ENCODE measurements at regions of chr10 and their contacts with region 1.

Region 1: GRCh38 chr10:112140110-112140970 is 43.2 kb downstream of the GPAM start:
- DNase-seq: peak; percentile 88
- H3K4me3 Mint-ChIP-seq: no peak overlapping the region
- H3K27ac Mint-ChIP-seq: no peak overlapping the region
- H3K4me1 Mint-ChIP-seq: no peaks in the 10 kb centered on the region
- H3K27me3 Mint-ChIP-seq: no peaks in the 10 kb centered on the region
- CTCF ChIP-seq: peak; percentile 92

Region 2: DNA sequence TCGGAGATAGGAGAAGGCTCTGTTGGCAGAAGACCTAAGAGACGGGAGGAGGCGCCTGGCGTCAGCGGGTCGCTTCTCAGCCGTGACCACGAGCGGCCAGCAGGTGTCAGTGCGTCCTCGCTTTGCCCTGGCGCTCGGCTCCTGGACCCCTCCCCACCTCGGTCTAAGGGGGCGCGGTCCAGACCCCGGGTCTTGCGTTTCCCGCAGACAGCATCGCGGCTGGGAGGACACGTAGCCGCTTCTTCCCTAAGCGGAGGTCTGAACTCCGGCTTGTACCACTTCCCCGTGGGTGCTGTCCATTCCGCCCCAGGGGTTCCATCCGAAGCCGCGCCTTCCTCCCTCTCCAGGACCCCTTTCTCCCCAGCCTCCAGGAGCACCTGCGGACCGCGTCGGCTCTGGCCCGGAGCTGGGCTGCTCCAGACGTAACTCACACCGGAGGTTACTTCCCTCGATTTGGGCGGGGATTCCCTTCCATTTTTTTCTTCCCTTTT is 1064.1 kb before region 1 on chr10:
- CTCF ChIA-PET with region 1: interaction called, 99 read pairs
- POLR2A ChIA-PET with region 1: interaction called, 3 read pairs
- intact Hi-C with region 1: loop called (anchors 5 kb)
- DNase-seq: peak; percentile 42
- H3K4me3 Mint-ChIP-seq: peak overlapping the region; percentile 69
- H3K27ac Mint-ChIP-seq: no peak overlapping the region
- H3K4me1 Mint-ChIP-seq: no peaks in the 10 kb centered on the region
- H3K27me3 Mint-ChIP-seq: peaks cover 46% of the 10 kb centered on the region
- CTCF ChIP-seq: peak; percentile 88

Region 3: GRCh38 chr10:111579473-111579872 is 560.9 kb before region 1 on chr10:
- CTCF ChIA-PET with region 1: no interaction called
- POLR2A ChIA-PET with region 1: no interaction called
- intact Hi-C with region 1: no loop called
- DNase-seq: no peak
- H3K4me3 Mint-ChIP-seq: no peak overlapping the region
- H3K27ac Mint-ChIP-seq: no peak overlapping the region
- H3K4me1 Mint-ChIP-seq: no peaks in the 10 kb centered on the region
- H3K27me3 Mint-ChIP-seq: no peaks in the 10 kb centered on the region
- CTCF ChIP-seq: no peak

Region 4: GRCh38 chr10:111598436-111599059 is 541.8 kb before region 1 on chr10:
- CTCF ChIA-PET with region 1: interaction called, 10 read pairs
- POLR2A ChIA-PET with region 1: no interaction called
- intact Hi-C with region 1: no loop called
- DNase-seq: peak; percentile 67
- H3K4me3 Mint-ChIP-seq: no peak overlapping the region
- H3K27ac Mint-ChIP-seq: no peak overlapping the region
- H3K4me1 Mint-ChIP-seq: no peaks in the 10 kb centered on the region
- H3K27me3 Mint-ChIP-seq: no peaks in the 10 kb centered on the region
- CTCF ChIP-seq: peak; percentile 80

Region 5: DNA sequence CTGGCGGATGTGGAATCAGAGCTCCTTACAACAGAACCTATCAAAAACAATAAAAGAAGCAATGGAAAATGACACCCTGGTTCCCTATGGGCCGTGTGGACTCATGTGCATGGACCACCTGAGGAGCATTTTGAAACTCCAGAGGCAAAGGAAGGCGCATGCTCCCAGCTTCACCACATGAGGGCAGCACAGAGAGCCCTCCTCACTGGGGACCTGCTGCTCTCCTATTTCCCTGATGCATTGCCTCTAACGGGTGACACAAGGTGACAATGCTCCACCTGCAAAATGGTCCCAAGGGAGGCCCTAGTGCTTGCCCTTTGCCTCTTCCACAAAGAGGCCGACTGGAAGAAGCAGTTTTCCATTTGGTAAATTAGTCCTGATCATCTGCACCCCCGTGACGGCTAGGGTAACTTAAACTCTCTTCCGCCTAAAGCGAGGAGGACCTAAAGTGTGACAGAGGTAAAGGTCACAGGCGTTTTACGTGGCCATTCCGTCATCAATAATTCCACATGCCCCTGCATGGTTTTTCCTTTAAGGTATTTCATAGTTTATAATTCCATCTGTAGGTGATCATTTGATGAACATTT is 24.4 kb before region 1 on chr10:
- CTCF ChIA-PET with region 1: interaction called, 25 read pairs
- POLR2A ChIA-PET with region 1: no interaction called
- intact Hi-C with region 1: no loop called
- DNase-seq: peak; percentile 58
- H3K4me3 Mint-ChIP-seq: no peak overlapping the region
- H3K27ac Mint-ChIP-seq: no peak overlapping the region
- H3K4me1 Mint-ChIP-seq: no peaks in the 10 kb centered on the region
- H3K27me3 Mint-ChIP-seq: no peaks in the 10 kb centered on the region
- CTCF ChIP-seq: peak; percentile 67

Region 6: DNA sequence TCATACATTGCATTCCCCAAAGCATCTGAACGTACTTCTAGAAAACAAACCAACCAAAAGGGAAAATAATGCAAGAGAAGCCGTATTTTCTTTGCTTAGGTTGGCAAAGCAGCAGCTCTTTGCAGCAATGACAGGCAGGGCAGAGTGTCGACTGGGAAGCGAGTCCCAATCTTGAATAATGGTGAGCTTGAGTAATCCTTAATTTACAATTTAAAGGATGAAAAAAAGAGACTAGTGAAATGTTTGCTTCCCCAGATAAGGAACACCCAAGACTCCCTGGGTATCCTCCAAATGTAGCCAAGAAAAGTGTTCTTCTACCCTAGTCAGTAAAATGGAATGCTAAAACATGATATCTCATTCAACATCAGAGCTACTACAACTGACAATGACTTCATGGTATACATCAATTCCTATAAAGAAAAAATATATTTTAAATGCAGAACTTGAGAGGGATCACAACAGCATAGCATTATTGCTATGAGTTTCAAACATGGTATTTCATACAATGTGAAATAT is 11.2 kb after region 1 on chr10:
- CTCF ChIA-PET with region 1: interaction called, 20 read pairs
- POLR2A ChIA-PET with region 1: interaction called, 5 read pairs
- intact Hi-C with region 1: no loop called
- DNase-seq: no peak
- H3K4me3 Mint-ChIP-seq: no peak overlapping the region
- H3K27ac Mint-ChIP-seq: no peak overlapping the region
- H3K4me1 Mint-ChIP-seq: no peaks in the 10 kb centered on the region
- H3K27me3 Mint-ChIP-seq: no peaks in the 10 kb centered on the region
- CTCF ChIP-seq: no peak

Region 7: GRCh38 chr10:112314822-112315474 is 174.6 kb after region 1 on chr10:
- CTCF ChIA-PET with region 1: interaction called, 47 read pairs
- POLR2A ChIA-PET with region 1: no interaction called
- intact Hi-C with region 1: loop called (anchors 1 kb)
- DNase-seq: peak; percentile 83
- H3K4me3 Mint-ChIP-seq: no peak overlapping the region
- H3K27ac Mint-ChIP-seq: no peak overlapping the region
- H3K4me1 Mint-ChIP-seq: no peaks in the 10 kb centered on the region
- H3K27me3 Mint-ChIP-seq: no peaks in the 10 kb centered on the region
- CTCF ChIP-seq: peak; percentile 87